CD4-positive, alpha-beta memory T cell (primary cell): ENCODE measurements at regions of chr19 and their contacts with region 1.

Region 1: GRCh38 chr19:19776041-19777008 is 43.4 kb upstream of the ZNF14 start:
- DNase-seq: peak; percentile 90 to 97 (median 92)
- H3K4me3 ChIP-seq: peak overlapping the region; percentile 100
- H3K4me3 Mint-ChIP-seq: peak overlapping the region; percentile 96 to 100 (median 98)
- H3K27ac ChIP-seq: peak overlapping the region; percentile 70
- H3K27ac Mint-ChIP-seq: peak overlapping the region; percentile 85 to 99 (median 98)
- H3K4me1 ChIP-seq: peaks cover 31% of the 10 kb centered on the region
- H3K4me1 Mint-ChIP-seq: peaks cover 28 to 51% (median 38%) of the 10 kb centered on the region in 4 donors
- H3K27me3 ChIP-seq: no peaks in the 10 kb centered on the region
- H3K27me3 Mint-ChIP-seq: no peaks in the 10 kb centered on the region

Region 2: GRCh38 chr19:19732579-19733501 is 43.5 kb before region 1 on chr19 and contains the start of gene ZNF14:
- CTCF ChIA-PET with region 1: interaction called, 4 read pairs
- POLR2A ChIA-PET with region 1: interaction called, 36 read pairs
- intact Hi-C with region 1: loop called (anchors 1 kb)
- DNase-seq: peak; percentile 87 to 94 (median 88)
- H3K4me3 ChIP-seq: peak within 1 kb of the TSS; percentile 59 to 81
- H3K4me3 Mint-ChIP-seq: peak within 1 kb of the TSS; percentile 95 to 100 (median 98)
- H3K27ac ChIP-seq: peak within 1 kb of the TSS; percentile 72
- H3K27ac Mint-ChIP-seq: peak within 1 kb of the TSS; percentile 93 to 99 (median 98)
- H3K4me1 ChIP-seq: peaks cover 18% of the 10 kb centered on the region
- H3K4me1 Mint-ChIP-seq: peaks cover 11 to 40% (median 24%) of the 10 kb centered on the region in 4 donors
- H3K27me3 ChIP-seq: no peaks in the 10 kb centered on the region
- H3K27me3 Mint-ChIP-seq: no peaks in the 10 kb centered on the region
- total RNA-seq, gene ZNF14: 31.2 to 32.2 TPM

Region 3: DNA sequence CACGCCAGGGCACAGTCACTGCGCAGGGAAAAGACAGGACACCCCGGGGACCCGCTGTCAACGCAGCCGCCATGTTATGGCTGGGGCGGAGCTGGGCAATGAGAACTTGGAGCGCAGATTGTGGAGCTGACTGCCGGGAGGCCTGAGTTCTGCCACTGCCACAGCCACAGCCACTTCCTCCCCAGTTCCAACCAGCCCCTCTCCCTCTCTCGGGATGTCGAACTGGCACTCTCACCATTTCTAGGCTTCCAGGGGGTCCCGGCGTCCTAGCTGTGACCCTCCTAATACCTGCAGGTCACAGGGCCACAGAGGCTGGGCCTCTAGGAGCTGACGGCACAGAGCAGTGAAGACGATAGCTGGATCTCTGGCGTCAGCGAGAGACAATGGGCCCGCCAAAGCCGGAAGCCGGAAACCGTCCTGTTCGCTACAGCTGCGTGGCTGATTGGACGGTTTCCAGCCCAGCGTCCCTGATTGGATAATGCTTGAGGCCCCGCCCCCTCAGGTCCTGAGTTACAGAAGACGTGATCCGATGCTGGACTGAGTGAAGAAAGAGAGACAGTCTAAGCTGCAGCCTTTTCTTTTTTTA is 45.1 kb after region 1 on chr19 and contains the start of gene ZNF506:
- CTCF ChIA-PET with region 1: interaction called, 5 read pairs
- POLR2A ChIA-PET with region 1: interaction called, 62 read pairs
- intact Hi-C with region 1: loop called (anchors 1 kb)
- DNase-seq: peak; percentile 96 to 98 (median 97)
- H3K4me3 ChIP-seq: peak within 1 kb of the TSS; percentile 69 to 84
- H3K4me3 Mint-ChIP-seq: peak within 1 kb of the TSS; percentile 98 to 100 (median 100)
- H3K27ac ChIP-seq: peak within 1 kb of the TSS; percentile 97
- H3K27ac Mint-ChIP-seq: peak within 1 kb of the TSS; percentile 100
- H3K4me1 ChIP-seq: peaks cover 41% of the 10 kb centered on the region
- H3K4me1 Mint-ChIP-seq: peaks cover 14 to 50% (median 32%) of the 10 kb centered on the region in 4 donors
- H3K27me3 ChIP-seq: no peaks in the 10 kb centered on the region
- H3K27me3 Mint-ChIP-seq: no peaks in the 10 kb centered on the region
- total RNA-seq, gene ZNF506: 76.4 to 80.5 TPM

Region 4: GRCh38 chr19:19871932-19872331 is 95.6 kb after region 1 on chr19:
- CTCF ChIA-PET with region 1: no interaction called
- POLR2A ChIA-PET with region 1: interaction called, 30 read pairs
- intact Hi-C with region 1: no loop called
- DNase-seq: no peak
- H3K4me3 ChIP-seq: no peak overlapping the region
- H3K4me3 Mint-ChIP-seq: peak overlapping the region in 3 of 8 donors; percentile 18 to 38 (median 27)
- H3K27ac ChIP-seq: peak overlapping the region; percentile 1
- H3K27ac Mint-ChIP-seq: peak overlapping the region in 4 of 7 donors; percentile 0 to 70 (median 31)
- H3K4me1 ChIP-seq: peaks cover 39% of the 10 kb centered on the region
- H3K4me1 Mint-ChIP-seq: peaks cover 35 to 50% (median 40%) of the 10 kb centered on the region in 4 donors
- H3K27me3 ChIP-seq: no peaks in the 10 kb centered on the region
- H3K27me3 Mint-ChIP-seq: no peaks in the 10 kb centered on the region

Region 5: DNA sequence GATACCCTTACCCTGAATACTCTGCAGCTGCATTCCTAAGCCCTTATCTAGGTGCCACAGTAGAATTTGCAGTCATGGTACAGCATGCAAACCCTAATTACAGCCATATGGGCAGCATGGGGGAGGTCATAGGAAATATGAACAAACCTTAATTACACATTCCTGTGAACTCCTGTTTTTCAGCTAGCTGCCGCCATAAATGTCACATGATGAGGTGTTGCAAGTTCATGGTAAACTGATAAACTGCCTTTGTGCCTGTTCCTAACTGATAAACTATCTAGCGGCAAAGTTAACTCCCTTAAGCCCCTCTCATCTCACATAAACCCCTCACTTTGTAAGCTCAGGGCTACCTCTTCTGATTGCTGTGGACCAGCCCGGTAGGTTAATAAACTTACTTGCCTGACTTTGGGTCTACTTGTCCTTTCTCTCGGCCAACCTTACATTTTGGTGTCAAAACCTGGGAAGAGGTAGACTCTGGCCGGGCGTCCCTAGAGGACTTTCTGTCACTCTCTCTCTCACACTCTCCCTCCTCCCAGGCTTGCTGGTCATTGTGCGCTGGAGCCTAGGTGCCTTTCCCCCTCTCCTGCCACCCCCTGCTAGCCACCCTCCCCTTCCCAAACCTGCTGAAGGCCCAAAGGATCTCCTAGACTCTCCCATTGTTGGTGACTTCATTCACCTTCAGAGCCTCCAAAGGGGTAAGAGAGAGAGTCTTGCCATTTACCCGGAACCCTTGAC is 167.7 kb after region 1 on chr19:
- CTCF ChIA-PET with region 1: no interaction called
- POLR2A ChIA-PET with region 1: no interaction called
- intact Hi-C with region 1: no loop called
- DNase-seq: no peak
- H3K4me3 ChIP-seq: no peak overlapping the region
- H3K4me3 Mint-ChIP-seq: no peak overlapping the region
- H3K27ac ChIP-seq: no peak overlapping the region
- H3K27ac Mint-ChIP-seq: no peak overlapping the region
- H3K4me1 ChIP-seq: no peaks in the 10 kb centered on the region
- H3K4me1 Mint-ChIP-seq: no peaks in the 10 kb centered on the region
- H3K27me3 ChIP-seq: no peaks in the 10 kb centered on the region
- H3K27me3 Mint-ChIP-seq: peaks cover 0 to 4% of the 10 kb centered on the region in 2 donors

Region 6: DNA sequence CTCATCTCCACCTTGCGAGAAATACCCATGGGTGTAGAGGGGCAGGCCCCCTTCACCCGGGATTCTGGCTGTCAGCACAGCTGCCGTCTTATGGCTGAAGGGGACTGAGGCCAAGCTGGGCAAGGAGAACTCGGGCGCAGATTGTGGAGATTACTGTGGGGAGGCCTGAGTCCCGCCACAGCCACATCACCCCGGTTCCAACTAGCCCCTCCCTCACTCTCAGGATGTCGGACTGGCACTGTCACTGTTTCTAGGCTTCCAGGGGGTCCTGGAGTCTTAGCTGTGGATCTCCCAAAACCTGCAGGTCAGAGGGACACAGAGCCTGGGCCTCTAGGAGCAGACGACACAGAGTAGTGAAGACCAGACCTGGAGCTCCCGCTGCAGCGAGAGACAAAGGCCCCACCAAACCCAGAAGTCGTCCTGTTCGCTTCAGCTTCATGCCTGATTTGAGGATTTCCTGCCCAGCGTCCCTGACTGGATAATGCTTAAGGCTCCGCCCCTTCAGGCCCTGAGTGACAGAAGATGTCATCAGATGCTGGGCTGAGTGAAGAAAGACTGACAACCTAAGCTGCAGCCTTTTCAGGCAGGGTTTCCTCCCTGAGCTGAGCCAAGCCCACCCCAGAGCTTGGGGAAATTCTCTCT is 180.2 kb after region 1 on chr19:
- CTCF ChIA-PET with region 1: interaction called, 3 read pairs
- POLR2A ChIA-PET with region 1: no interaction called
- intact Hi-C with region 1: loop called (anchors 5 kb)
- DNase-seq: no peak
- H3K4me3 ChIP-seq: no peak overlapping the region
- H3K4me3 Mint-ChIP-seq: no peak overlapping the region
- H3K27ac ChIP-seq: no peak overlapping the region
- H3K27ac Mint-ChIP-seq: no peak overlapping the region
- H3K4me1 ChIP-seq: no peaks in the 10 kb centered on the region
- H3K4me1 Mint-ChIP-seq: peaks cover 0 to 7% (median 3%) of the 10 kb centered on the region in 4 donors
- H3K27me3 ChIP-seq: no peaks in the 10 kb centered on the region
- H3K27me3 Mint-ChIP-seq: no peaks in the 10 kb centered on the region